Sigmoid colon (tissue), 7 donors: ENCODE measurements at regions of chr7 and their contacts with region 1.

Region 1: DNA sequence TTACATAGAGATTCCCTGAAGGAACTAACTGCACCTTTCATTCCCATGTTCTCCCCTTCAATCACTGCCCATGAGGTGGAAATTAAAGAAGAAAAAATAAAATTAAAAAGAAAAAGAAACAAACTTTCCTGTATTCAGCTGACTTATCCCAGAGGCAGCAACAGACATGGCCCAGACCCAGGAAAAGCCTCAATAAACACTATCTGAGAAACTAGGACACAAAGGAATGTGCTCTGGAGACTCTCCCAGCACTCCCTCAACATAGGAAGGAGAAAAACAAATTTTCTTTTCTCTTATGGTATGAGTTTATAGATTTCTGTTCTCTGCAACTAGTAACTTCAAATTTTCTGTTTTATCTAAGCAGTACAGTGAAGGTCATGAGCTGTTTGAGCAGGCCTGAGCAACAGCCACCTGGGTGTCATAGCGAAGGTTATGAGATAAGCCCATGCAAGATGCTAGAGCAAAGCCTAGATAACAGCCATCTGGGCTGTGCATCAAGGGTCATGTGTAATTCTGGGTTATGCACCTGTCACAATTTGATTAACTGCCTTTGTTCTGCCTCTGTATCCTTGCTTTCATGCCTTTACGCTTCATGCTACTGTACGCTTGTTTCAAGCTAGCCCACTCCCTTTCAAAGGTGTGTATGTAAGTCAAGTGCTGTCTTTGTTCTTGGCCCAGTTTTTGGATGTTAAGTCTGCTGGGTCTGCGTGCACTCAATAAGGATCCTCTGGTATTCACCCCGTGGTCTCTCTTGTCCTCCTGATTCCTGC is 11.0 kb upstream of the OR6B1 start:
- DNase-seq: no peak
- H3K4me3 ChIP-seq: no peak overlapping the region
- H3K27ac ChIP-seq: peak overlapping the region; percentile 23 to 52 (median 42)
- H3K4me1 ChIP-seq: peaks cover 0 to 44% (median 38%) of the 10 kb centered on the region in 4 donors
- H3K27me3 ChIP-seq: no peaks in the 10 kb centered on the region
- CTCF ChIP-seq: no peak
- EP300 ChIP-seq: no peak
- POLR2A ChIP-seq: no peak

Region 2: DNA sequence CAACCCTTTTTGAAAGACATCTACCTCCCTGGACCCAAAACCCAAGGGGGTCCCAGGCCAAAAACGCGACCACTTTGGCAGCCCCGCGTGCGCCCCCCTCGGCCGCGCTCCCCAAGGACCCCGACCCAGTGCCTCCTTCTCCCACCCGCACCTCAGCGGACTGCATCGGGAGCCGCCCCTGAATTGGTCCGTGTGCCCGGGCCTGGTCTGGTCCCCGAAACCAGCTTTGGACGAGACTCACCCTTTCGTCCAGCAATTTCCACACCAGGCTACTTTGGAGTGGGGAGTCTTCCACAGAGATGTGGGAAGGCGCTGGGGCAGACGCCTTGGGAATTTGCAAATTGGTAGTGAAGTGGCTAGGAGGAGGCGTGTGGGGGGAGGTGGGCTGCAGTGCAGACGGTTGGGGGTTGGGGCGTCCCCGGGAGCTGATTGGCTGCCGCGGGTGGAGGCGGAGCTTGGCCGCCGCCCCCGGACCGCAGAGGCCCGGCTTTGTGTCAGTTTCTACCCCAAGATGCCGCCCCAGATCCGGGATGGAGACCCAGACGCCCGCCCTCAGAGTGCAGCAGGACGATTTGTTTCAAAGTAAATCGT is 104.1 kb before region 1 on chr7:
- intact Hi-C with region 1: loop called (anchors 5 kb)
- DNase-seq: peak; percentile 79
- H3K4me3 ChIP-seq: peak overlapping the region; percentile 29 to 61 (median 50)
- H3K27ac ChIP-seq: peak overlapping the region; percentile 10 to 84 (median 74)
- H3K4me1 ChIP-seq: peaks cover 0 to 49% (median 24%) of the 10 kb centered on the region in 4 donors
- H3K27me3 ChIP-seq: no peaks in the 10 kb centered on the region
- CTCF ChIP-seq: no peak
- EP300 ChIP-seq: no peak
- POLR2A ChIP-seq: no peak

Region 3: DNA sequence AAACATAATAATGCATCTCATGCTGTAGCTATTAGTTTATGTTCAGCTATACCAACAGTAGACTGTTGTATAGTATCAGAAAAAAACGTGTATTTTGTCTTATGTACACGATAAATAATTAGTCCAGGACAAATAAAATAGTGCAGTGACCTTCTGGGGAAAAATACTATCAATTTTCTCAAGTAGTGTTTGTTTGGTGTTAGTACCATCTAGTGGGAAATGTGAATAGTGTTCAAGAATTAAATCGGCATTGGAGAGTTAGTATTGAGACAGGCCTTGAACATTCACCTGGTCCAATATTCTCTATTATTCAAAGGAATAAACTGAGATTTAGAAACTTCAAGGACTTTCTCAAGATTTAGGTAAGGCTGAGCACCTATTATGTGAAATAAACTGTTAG is 37.9 kb after region 1 on chr7:
- intact Hi-C with region 1: no loop called
- DNase-seq: no peak
- H3K4me3 ChIP-seq: no peak overlapping the region
- H3K27ac ChIP-seq: no peak overlapping the region
- H3K4me1 ChIP-seq: no peaks in the 10 kb centered on the region
- H3K27me3 ChIP-seq: no peaks in the 10 kb centered on the region
- CTCF ChIP-seq: peak in 3 of 4 experiments; percentile 26 to 44 (median 29)
- EP300 ChIP-seq: no peak
- POLR2A ChIP-seq: no peak

Region 4: DNA sequence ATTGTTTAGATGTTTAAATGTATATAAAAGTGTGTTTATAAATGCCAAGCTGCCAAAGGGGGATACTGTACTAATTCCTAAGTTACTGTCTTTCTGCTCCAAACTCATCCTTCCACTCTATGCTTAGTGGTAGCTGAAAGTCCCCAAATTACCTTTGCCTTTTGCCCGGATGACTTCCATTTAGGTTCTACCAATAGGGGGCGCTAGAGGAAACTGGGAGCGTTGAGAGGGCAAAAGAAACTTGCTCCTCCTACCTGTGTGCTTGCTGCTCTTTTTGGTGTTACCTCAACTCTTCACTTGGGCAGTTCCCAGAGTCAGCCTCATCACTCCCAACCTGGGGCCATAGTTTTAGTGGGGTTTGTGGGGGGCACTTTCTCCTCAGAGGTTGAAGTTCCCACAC is 74.5 kb after region 1 on chr7:
- intact Hi-C with region 1: no loop called
- DNase-seq: no peak
- H3K4me3 ChIP-seq: no peak overlapping the region
- H3K27ac ChIP-seq: no peak overlapping the region
- H3K4me1 ChIP-seq: no peaks in the 10 kb centered on the region
- H3K27me3 ChIP-seq: no peaks in the 10 kb centered on the region
- CTCF ChIP-seq: no peak
- EP300 ChIP-seq: no peak
- POLR2A ChIP-seq: no peak

Region 5: DNA sequence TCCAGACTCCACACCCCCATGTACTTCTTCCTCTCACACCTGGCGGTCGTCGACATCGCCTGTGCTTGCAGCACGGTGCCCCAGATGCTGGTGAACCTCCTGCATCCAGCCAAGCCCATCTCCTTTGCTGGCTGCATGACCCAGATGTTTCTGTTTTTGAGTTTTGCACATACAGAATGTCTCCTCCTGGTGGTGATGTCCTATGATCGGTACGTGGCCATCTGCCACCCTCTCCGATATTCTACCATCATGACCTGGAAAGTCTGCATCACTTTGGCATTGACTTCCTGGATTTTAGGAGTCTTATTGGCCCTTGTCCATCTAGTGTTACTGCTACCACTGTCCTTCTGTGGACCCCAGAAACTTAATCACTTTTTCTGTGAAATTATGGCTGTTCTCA is 85.2 kb after region 1 on chr7:
- intact Hi-C with region 1: no loop called
- DNase-seq: no peak
- H3K4me3 ChIP-seq: no peak overlapping the region
- H3K27ac ChIP-seq: no peak overlapping the region
- H3K4me1 ChIP-seq: no peaks in the 10 kb centered on the region
- H3K27me3 ChIP-seq: no peaks in the 10 kb centered on the region
- CTCF ChIP-seq: no peak
- EP300 ChIP-seq: no peak
- POLR2A ChIP-seq: no peak

Region 6: DNA sequence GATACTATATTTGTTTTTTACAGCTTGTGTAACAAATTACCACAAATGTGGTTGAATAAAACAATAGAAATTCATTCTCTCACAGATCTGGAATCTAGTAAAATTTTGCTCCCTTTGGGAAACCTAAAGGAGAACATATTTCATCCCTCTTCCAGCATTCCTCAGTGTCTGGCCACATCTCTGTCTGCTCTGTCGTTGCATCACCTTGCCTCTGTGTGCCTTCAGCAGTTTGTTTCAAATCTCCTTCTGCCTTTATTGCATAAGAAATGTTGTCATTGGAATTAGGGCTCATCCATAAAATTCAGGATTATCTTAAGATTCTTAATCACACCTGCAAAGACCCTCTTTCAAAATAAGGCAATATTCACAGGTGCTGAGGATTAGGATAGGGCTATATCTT is 148.3 kb after region 1 on chr7:
- intact Hi-C with region 1: no loop called
- DNase-seq: no peak
- H3K4me3 ChIP-seq: no peak overlapping the region
- H3K27ac ChIP-seq: no peak overlapping the region
- H3K4me1 ChIP-seq: no peaks in the 10 kb centered on the region
- H3K27me3 ChIP-seq: no peaks in the 10 kb centered on the region
- CTCF ChIP-seq: no peak
- EP300 ChIP-seq: no peak
- POLR2A ChIP-seq: no peak